MCF 10A (cell line): ENCODE measurements at regions of chr2 and their contacts with region 1.

Region 1: GRCh38 chr2:46171411-46171953 is 125.7 kb upstream of the EPAS1 start:
- DNase-seq: peak; percentile 89
- H3K4me3 Mint-ChIP-seq: peak overlapping the region; percentile 35
- H3K27ac Mint-ChIP-seq: peak overlapping the region; percentile 70
- H3K4me1 Mint-ChIP-seq: peaks cover 36% of the 10 kb centered on the region
- H3K27me3 Mint-ChIP-seq: no peaks in the 10 kb centered on the region
- CTCF ChIP-seq: no peak

Region 2: DNA sequence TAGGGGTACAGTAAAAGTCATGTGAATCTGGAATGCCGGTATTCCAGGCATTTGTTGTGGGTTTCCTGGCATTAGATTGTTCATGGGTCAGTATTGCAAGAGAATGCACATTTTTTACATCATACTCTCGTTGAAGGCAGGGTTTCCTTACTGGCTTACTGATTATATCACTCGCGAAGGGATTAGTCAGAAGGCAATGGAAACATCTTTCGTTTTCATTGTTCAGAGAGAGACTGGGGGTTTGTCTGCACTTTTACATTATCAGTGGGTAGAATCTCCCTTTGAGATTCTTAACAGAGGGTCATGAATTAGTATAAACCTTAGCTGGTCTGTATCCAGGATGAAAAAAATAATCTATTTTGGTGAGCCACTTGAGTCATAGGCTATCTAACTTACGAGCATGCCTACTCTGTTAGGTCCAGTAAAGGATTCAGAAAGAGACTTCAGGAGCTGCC is 103.6 kb before region 1 on chr2:
- CTCF ChIA-PET with region 1: interaction called, 21 read pairs
- POLR2A ChIA-PET with region 1: interaction called, 3 read pairs
- intact Hi-C with region 1: loop called (anchors 5 kb)
- DNase-seq: peak; percentile 91
- H3K4me3 Mint-ChIP-seq: peak overlapping the region; percentile 55
- H3K27ac Mint-ChIP-seq: peak overlapping the region; percentile 25
- H3K4me1 Mint-ChIP-seq: peaks cover 24% of the 10 kb centered on the region
- H3K27me3 Mint-ChIP-seq: no peaks in the 10 kb centered on the region
- CTCF ChIP-seq: no peak

Region 3: GRCh38 chr2:46097714-46098480 is 73.6 kb before region 1 on chr2:
- CTCF ChIA-PET with region 1: no interaction called
- POLR2A ChIA-PET with region 1: interaction called, 31 read pairs
- intact Hi-C with region 1: loop called (anchors 5 kb)
- DNase-seq: peak; percentile 92
- H3K4me3 Mint-ChIP-seq: peak overlapping the region; percentile 19
- H3K27ac Mint-ChIP-seq: peak overlapping the region; percentile 92
- H3K4me1 Mint-ChIP-seq: peaks cover 20% of the 10 kb centered on the region
- H3K27me3 Mint-ChIP-seq: no peaks in the 10 kb centered on the region
- CTCF ChIP-seq: no peak

Region 4: DNA sequence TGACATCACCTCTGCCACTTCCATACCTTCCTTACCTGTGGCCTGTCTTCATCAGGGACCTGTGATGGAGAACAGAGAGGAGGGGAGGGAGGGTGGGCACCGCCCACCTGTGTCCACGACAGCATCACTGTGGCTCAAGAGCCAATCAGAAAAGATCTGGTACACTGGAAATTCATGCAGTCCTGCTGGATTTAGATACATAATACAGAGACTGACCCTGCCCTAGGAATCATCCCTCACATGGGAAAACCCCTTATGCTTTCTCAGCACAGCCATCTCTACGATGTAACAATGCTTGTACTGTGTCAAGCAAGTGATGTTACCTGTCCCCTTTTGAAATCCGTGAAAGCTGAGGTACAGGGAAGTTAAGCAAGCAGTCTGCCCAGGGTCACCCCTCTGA is 19.9 kb before region 1 on chr2:
- CTCF ChIA-PET with region 1: no interaction called
- POLR2A ChIA-PET with region 1: no interaction called
- intact Hi-C with region 1: no loop called
- DNase-seq: no peak
- H3K4me3 Mint-ChIP-seq: no peak overlapping the region
- H3K27ac Mint-ChIP-seq: no peak overlapping the region
- H3K4me1 Mint-ChIP-seq: peaks cover 6% of the 10 kb centered on the region
- H3K27me3 Mint-ChIP-seq: no peaks in the 10 kb centered on the region
- CTCF ChIP-seq: no peak

Region 5: DNA sequence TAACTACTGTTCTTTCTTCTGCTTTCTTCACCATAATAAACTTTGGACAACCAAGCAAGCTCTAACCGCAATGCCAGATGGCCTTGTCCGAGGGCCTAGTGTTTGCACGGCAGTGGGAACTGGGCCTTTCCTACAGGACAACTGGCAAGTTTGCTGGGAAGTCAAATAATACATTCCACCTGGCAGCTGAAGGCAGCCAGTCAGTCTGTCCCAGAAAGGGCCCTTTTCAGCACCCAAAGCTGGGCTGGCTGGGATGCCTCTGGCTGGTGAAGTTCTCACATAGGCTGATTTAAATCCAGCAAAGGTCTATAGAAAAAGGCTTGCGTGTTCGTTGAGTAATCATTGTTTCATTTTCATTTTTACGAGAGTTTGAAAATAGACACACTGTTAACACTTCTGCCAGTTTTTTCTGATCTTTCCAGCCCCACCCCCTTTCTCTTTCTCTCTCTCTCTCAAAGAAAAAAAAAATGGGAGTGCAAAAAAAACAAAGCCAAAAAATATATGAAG is 15.7 kb after region 1 on chr2:
- CTCF ChIA-PET with region 1: no interaction called
- POLR2A ChIA-PET with region 1: interaction called, 10 read pairs
- intact Hi-C with region 1: no loop called
- DNase-seq: peak; percentile 33
- H3K4me3 Mint-ChIP-seq: no peak overlapping the region
- H3K27ac Mint-ChIP-seq: no peak overlapping the region
- H3K4me1 Mint-ChIP-seq: peaks cover under 1% of the 10 kb centered on the region
- H3K27me3 Mint-ChIP-seq: no peaks in the 10 kb centered on the region
- CTCF ChIP-seq: no peak